Activated CD8-positive, alpha-beta memory T cell treated with anti-CD3 and anti-CD28 coated beads, Interleukin-2, amount 10 ng/mL, durations not matched to agents 7 days and 5 days (primary cell): ENCODE measurements at regions of chr12 and their contacts with region 1.

Region 1: GRCh38 chr12:62799126-62799736 is 135.7 kb downstream of the PPM1H start:
- DNase-seq: peak; percentile 72
- ATAC-seq: peak; percentile 75
- H3K4me3 Mint-ChIP-seq: no peak overlapping the region
- H3K27ac Mint-ChIP-seq: no peak overlapping the region
- H3K4me1 Mint-ChIP-seq: no peaks in the 10 kb centered on the region
- H3K27me3 Mint-ChIP-seq: peaks cover 26% of the 10 kb centered on the region

Region 2: GRCh38 chr12:62435303-62436163 is 363.7 kb before region 1 on chr12:
- CTCF ChIA-PET with region 1: interaction called, 116 read pairs
- DNase-seq: peak; percentile 61
- ATAC-seq: peak; percentile 74
- H3K4me3 Mint-ChIP-seq: peak overlapping the region; percentile 73
- H3K27ac Mint-ChIP-seq: no peak overlapping the region
- H3K4me1 Mint-ChIP-seq: peaks cover 18% of the 10 kb centered on the region
- H3K27me3 Mint-ChIP-seq: peaks cover 62% of the 10 kb centered on the region

Region 3: GRCh38 chr12:62562846-62563245 is 236.4 kb before region 1 on chr12:
- CTCF ChIA-PET with region 1: interaction called, 10 read pairs
- DNase-seq: no peak
- ATAC-seq: no peak
- H3K4me3 Mint-ChIP-seq: no peak overlapping the region
- H3K27ac Mint-ChIP-seq: no peak overlapping the region
- H3K4me1 Mint-ChIP-seq: peaks cover under 1% of the 10 kb centered on the region
- H3K27me3 Mint-ChIP-seq: no peaks in the 10 kb centered on the region

Region 4: GRCh38 chr12:62581288-62582064 is 217.8 kb before region 1 on chr12:
- CTCF ChIA-PET with region 1: interaction called, 58 read pairs
- DNase-seq: no peak
- ATAC-seq: no peak
- H3K4me3 Mint-ChIP-seq: no peak overlapping the region
- H3K27ac Mint-ChIP-seq: no peak overlapping the region
- H3K4me1 Mint-ChIP-seq: no peaks in the 10 kb centered on the region
- H3K27me3 Mint-ChIP-seq: no peaks in the 10 kb centered on the region

Region 5: DNA sequence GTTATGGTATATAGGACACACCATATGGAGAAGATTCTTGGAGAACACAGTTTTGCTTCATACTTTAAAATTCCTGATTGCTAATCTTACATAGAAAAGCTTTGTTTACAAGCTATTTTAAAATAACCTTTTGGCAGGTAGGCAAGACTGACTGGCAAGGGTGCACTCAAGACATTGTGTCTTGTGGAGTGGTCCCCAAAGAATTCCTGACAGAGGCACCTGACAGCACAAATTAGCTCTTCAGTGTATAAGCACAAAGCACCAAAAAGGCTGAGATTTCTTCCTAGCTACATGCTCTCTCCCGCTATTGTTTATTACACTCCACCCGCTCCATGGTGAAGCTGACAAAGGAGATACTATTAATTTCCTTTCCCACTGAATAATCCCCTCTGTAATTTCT is 193.2 kb before region 1 on chr12:
- CTCF ChIA-PET with region 1: interaction called, 12 read pairs
- DNase-seq: no peak
- ATAC-seq: no peak
- H3K4me3 Mint-ChIP-seq: no peak overlapping the region
- H3K27ac Mint-ChIP-seq: no peak overlapping the region
- H3K4me1 Mint-ChIP-seq: peaks cover 34% of the 10 kb centered on the region
- H3K27me3 Mint-ChIP-seq: no peaks in the 10 kb centered on the region

Region 6: DNA sequence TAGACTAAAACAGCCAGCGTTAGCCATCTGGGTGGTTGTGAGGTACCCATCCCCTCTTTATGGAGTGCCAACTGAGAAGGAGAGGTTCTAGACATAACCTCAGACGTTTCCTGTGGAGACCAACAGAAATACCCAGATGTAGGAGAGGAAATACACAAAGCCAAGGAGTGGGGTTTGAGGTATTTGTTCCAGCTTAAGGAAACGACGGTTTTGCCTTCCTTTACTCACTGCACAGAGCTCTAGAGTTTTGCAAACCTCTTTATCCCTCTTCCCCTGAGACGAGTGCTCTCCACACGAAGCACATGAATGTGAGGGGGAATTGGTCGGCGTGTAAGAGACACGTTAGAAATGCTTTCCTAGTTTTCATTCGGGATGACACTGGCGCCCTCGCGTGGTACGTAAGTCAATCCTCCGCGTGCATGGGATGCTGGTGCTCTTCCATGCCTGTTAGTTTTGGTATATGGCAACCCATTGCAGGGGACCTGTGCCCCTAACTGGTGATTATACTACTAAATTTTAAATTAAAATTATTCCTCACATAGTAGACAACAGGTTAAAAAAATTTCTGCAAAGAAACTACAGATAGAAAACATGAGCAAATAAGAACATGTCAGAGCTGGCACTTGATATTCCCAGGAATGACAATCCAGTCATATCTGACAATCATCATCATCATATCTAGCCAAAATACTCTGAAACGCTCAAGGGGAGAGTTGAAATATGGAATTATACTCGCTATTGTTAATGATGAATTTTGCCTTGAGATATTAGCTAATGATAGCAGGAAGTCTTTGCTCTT is 14.0 kb after region 1 on chr12:
- CTCF ChIA-PET with region 1: interaction called, 30 read pairs
- DNase-seq: peak; percentile 53
- ATAC-seq: peak; percentile 58
- H3K4me3 Mint-ChIP-seq: peak overlapping the region; percentile 37
- H3K27ac Mint-ChIP-seq: no peak overlapping the region
- H3K4me1 Mint-ChIP-seq: peaks cover 13% of the 10 kb centered on the region
- H3K27me3 Mint-ChIP-seq: peaks cover 56% of the 10 kb centered on the region

Region 7: DNA sequence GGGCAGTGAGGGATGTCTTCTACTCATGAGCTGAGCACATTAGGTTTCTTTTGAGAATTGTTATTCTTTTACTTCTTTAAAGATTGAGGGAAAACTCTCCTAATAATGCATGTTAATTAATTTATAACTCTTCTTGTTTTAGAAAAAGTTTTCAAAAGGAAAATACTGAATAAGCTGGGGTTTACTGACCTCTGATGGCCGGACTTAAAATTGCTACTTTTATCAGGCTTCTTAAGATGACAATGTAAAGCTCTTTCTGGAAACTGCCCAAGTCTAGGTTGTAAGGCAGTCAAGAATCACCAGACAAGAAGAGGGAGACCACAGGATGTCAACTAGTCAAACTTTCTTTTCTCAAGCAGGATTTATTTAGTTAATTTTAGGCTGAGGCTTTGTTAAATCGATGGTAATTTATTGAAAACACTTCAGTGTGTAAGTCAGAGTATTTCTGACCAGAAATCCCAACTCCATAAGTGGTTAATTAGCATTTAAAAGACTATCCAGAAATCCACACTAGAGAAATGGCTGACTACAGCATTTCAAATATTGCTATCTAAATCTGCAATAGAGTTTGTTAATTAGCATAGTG is 269.7 kb after region 1 on chr12:
- CTCF ChIA-PET with region 1: no interaction called
- DNase-seq: no peak
- ATAC-seq: no peak
- H3K4me3 Mint-ChIP-seq: no peak overlapping the region
- H3K27ac Mint-ChIP-seq: no peak overlapping the region
- H3K4me1 Mint-ChIP-seq: no peaks in the 10 kb centered on the region
- H3K27me3 Mint-ChIP-seq: peaks cover 2% of the 10 kb centered on the region

Region 8: DNA sequence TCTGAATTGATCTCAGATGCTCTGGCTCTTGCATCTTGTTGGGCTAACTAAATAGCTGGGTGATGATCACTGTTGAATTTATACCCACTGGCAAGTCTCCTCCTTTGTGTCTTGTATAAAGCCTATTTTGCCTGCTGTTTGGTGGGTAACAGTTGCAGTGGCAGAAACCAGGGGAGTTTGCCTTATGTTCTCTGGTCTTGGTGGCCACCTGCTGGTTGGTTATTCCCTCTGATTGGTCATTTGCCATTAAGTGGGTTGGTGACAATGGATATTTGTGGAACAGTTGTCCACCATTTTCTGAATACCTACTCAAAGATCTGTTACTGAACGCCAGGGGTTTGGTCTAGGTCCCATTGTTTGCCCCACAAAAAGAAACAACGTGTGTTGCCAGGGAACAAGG is 299.6 kb after region 1 on chr12:
- CTCF ChIA-PET with region 1: no interaction called
- DNase-seq: no peak
- ATAC-seq: no peak
- H3K4me3 Mint-ChIP-seq: no peak overlapping the region
- H3K27ac Mint-ChIP-seq: no peak overlapping the region
- H3K4me1 Mint-ChIP-seq: no peaks in the 10 kb centered on the region
- H3K27me3 Mint-ChIP-seq: peaks cover 4% of the 10 kb centered on the region